MCF 10A (cell line): ENCODE measurements at regions of chr17 and their contacts with region 1.

Region 1: GRCh38 chr17:64968652-64969501 is 49.6 kb upstream of the LRRC37A3 start:
- DNase-seq: no peak
- H3K4me3 Mint-ChIP-seq: no peak overlapping the region
- H3K27ac Mint-ChIP-seq: no peak overlapping the region
- H3K4me1 Mint-ChIP-seq: no peaks in the 10 kb centered on the region
- H3K27me3 Mint-ChIP-seq: no peaks in the 10 kb centered on the region
- CTCF ChIP-seq: no peak

Region 2: GRCh38 chr17:64920026-64920418 is 48.9 kb before region 1 on chr17:
- CTCF ChIA-PET with region 1: no interaction called
- POLR2A ChIA-PET with region 1: interaction called, 4 read pairs
- intact Hi-C with region 1: loop called (anchors 5 kb)
- DNase-seq: no peak
- H3K4me3 Mint-ChIP-seq: peak overlapping the region; percentile 77
- H3K27ac Mint-ChIP-seq: peak overlapping the region; percentile 89
- H3K4me1 Mint-ChIP-seq: no peaks in the 10 kb centered on the region
- H3K27me3 Mint-ChIP-seq: no peaks in the 10 kb centered on the region
- CTCF ChIP-seq: no peak

Region 3: GRCh38 chr17:64938925-64939474 is 29.9 kb before region 1 on chr17:
- CTCF ChIA-PET with region 1: interaction called, 47 read pairs
- POLR2A ChIA-PET with region 1: interaction called, 3 read pairs
- intact Hi-C with region 1: no loop called
- DNase-seq: peak; percentile 37
- H3K4me3 Mint-ChIP-seq: no peak overlapping the region
- H3K27ac Mint-ChIP-seq: no peak overlapping the region
- H3K4me1 Mint-ChIP-seq: no peaks in the 10 kb centered on the region
- H3K27me3 Mint-ChIP-seq: no peaks in the 10 kb centered on the region
- CTCF ChIP-seq: peak; percentile 42

Region 4: DNA sequence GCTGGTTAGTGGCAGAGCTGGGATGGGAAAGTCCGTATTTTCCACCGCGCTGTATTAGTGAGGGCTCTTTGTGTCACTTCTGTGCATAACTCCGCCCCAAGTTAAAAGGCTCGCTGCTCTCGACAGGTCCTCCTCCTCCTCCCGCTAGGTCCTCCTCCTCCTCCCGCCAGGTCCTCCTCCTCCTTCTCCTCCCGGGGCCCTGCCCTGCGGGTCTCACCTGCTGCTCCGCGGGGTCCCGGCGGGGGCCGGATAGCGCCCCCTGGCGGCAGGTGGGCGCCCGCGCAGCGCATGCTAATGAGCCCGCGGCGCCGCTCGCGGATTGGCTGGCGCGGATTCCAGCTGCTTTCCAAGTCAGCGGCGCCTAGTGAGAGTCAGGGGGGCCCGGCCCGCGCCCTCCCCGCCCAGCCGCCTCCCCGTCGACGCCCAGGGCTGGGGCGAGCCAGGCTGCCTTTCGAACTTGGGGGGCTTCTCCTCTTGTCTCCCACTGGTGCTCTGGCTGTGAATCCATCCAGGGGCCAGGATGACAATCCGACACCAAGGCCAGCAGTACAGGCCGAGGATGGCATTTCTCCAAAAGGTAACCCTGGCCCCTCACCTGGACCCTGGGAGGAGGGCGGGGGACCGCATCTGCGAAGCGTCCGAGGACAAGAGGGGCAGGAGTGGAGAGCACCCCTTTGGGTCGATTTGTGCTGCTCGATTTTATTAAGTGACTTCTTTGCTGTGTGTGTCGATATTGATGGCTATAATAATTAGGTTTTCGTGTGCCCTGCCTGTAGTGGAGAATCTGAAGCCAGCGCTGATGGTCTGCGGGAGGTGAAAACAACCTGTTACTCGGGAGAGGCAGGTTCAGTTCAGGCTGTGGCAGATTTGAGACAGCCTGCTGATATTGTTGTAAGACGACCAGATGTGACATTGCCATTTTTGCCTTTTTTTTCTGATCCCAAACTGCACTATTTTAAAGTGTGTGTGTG is 168.4 kb after region 1 on chr17 and contains the start of gene RGS9:
- CTCF ChIA-PET with region 1: interaction called, 4 read pairs
- POLR2A ChIA-PET with region 1: interaction called, 10 read pairs
- intact Hi-C with region 1: loop called (anchors 1 kb)
- DNase-seq: peak; percentile 75
- H3K4me3 Mint-ChIP-seq: peak within 1 kb of the TSS; percentile 74
- H3K27ac Mint-ChIP-seq: no peak within 1 kb of the TSS
- H3K4me1 Mint-ChIP-seq: peaks cover 11% of the 10 kb centered on the region
- H3K27me3 Mint-ChIP-seq: peaks cover 31% of the 10 kb centered on the region
- CTCF ChIP-seq: peak; percentile 94
- total RNA-seq, gene RGS9: 0.49 and 0.61 TPM in 2 replicates